Activated CD4-positive, alpha-beta memory T cell treated with anti-CD3 and anti-CD28 coated beads for 36 hours (primary cell): ENCODE measurements at regions of chr11 and their contacts with region 1.

Region 1: GRCh38 chr11:11931461-11932055 is 76.9 kb downstream of the DKK3 start:
- DNase-seq: no peak
- H3K4me3 Mint-ChIP-seq: no peak overlapping the region
- H3K27ac Mint-ChIP-seq: no peak overlapping the region
- H3K4me1 Mint-ChIP-seq: no peaks in the 10 kb centered on the region
- H3K27me3 Mint-ChIP-seq: no peaks in the 10 kb centered on the region

Region 2: GRCh38 chr11:11946180-11946579 is 14.6 kb after region 1 on chr11:
- CTCF ChIA-PET with region 1: interaction called, 13 read pairs
- POLR2A ChIA-PET with region 1: no interaction called
- intact Hi-C with region 1: no loop called
- DNase-seq: no peak
- H3K4me3 Mint-ChIP-seq: no peak overlapping the region
- H3K27ac Mint-ChIP-seq: no peak overlapping the region
- H3K4me1 Mint-ChIP-seq: no peaks in the 10 kb centered on the region
- H3K27me3 Mint-ChIP-seq: no peaks in the 10 kb centered on the region

Region 3: GRCh38 chr11:12043959-12044819 is 112.6 kb after region 1 on chr11:
- CTCF ChIA-PET with region 1: interaction called, 11 read pairs
- POLR2A ChIA-PET with region 1: no interaction called
- intact Hi-C with region 1: loop called (anchors 1 kb)
- DNase-seq: peak; percentile 76
- H3K4me3 Mint-ChIP-seq: no peak overlapping the region
- H3K27ac Mint-ChIP-seq: no peak overlapping the region
- H3K4me1 Mint-ChIP-seq: peaks cover 4% of the 10 kb centered on the region
- H3K27me3 Mint-ChIP-seq: peaks cover 1% of the 10 kb centered on the region